CD4-positive, alpha-beta T cell (primary cell): ENCODE measurements at regions of chr6 and their contacts with region 1.

Region 1: GRCh38 chr6:158704181-158704822 is 54.4 kb downstream of the SYTL3 start:
- DNase-seq: peak; percentile 43 to 89 (median 74)
- ATAC-seq: peak; percentile 96
- H3K4me3 ChIP-seq: peak overlapping the region; percentile 44
- H3K4me3 Mint-ChIP-seq: peak overlapping the region; percentile 69
- H3K27ac ChIP-seq: no peak overlapping the region
- H3K27ac Mint-ChIP-seq: no peak overlapping the region
- H3K4me1 ChIP-seq: peaks cover 17% of the 10 kb centered on the region
- H3K4me1 Mint-ChIP-seq: peaks cover 6% of the 10 kb centered on the region
- H3K27me3 ChIP-seq: no peaks in the 10 kb centered on the region
- H3K27me3 Mint-ChIP-seq: no peaks in the 10 kb centered on the region
- CTCF ChIP-seq: peak; percentile 99

Region 2: DNA sequence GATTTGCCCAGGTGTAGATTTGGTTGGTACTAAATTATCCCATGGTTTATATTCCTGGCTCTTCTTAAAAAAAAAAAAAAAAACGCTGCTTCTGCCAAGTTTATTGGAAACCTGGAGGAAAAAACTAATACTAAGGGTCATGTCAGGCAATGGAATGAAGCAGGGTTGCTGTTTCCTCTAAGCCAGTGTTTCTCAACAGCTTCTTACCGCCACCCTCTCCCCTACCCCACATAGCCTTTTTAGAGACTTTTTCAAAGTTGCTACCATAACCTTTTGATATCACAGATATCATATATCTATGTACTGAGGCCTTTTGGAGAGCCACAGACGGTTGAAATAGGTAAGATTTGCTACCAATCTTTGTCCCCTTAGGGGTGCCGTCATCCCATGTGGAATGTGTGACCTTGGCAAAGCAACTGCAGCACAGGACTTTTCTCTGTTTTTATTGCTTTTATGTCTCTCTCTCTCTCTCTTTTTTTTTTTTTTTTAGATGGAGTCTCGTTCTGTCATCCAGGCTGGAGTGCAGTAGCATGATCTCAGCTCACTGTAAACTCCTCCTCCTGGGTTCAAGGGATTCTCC is 19.5 kb before region 1 on chr6:
- CTCF ChIA-PET with region 1: no interaction called
- POLR2A ChIA-PET with region 1: no interaction called
- intact Hi-C with region 1: no loop called
- DNase-seq: no peak
- ATAC-seq: no peak
- H3K4me3 ChIP-seq: no peak overlapping the region
- H3K4me3 Mint-ChIP-seq: no peak overlapping the region
- H3K27ac ChIP-seq: no peak overlapping the region
- H3K27ac Mint-ChIP-seq: peak overlapping the region; percentile 7
- H3K4me1 ChIP-seq: peaks cover 44% of the 10 kb centered on the region
- H3K4me1 Mint-ChIP-seq: peaks cover 49% of the 10 kb centered on the region
- H3K27me3 ChIP-seq: no peaks in the 10 kb centered on the region
- H3K27me3 Mint-ChIP-seq: no peaks in the 10 kb centered on the region
- CTCF ChIP-seq: no peak

Region 3: DNA sequence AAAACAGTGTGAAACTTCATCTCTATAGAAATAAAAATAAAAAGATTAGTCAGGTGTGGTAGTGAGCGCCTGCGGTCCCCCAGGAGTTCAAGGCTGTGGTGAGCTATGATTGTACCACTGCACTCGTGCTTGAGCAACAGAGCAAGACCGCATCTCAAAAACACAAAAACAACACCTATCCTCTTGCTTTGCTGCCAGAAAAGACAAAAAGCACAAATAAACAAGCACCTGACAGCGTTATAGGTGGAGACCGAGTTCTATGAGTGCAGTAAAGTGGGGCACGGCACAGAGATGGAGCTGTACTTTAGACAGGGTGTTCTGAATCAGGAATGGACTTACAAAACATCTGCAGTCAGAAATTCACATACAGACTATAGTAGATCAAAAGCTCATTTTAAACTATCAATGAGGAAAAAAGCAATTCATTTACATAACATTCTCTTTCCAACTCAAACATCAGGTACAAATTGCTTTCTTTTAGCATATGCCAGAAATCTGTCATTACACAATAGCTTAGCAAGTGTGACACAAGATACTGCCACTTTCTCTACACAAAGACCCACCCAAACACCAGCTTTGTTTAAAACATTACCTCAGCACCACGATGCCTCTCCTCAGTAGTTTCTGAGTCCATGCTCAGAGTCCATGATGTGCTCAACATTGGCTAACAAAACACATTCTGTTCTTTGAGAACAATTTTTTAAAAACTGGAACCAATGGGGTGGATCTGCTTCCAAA is 104.8 kb after region 1 on chr6:
- CTCF ChIA-PET with region 1: interaction called, 4 read pairs
- POLR2A ChIA-PET with region 1: no interaction called
- intact Hi-C with region 1: loop called in 1 of 2 experiments (anchors 5 kb)
- DNase-seq: peak in 6 of 14 experiments; percentile 32 to 73 (median 50)
- ATAC-seq: peak; percentile 58
- H3K4me3 ChIP-seq: no peak overlapping the region
- H3K4me3 Mint-ChIP-seq: peak overlapping the region; percentile 60
- H3K27ac ChIP-seq: peak overlapping the region in 1 of 2 donors; percentile 43
- H3K27ac Mint-ChIP-seq: peak overlapping the region; percentile 82
- H3K4me1 ChIP-seq: peaks cover 79% of the 10 kb centered on the region
- H3K4me1 Mint-ChIP-seq: peaks cover 99% of the 10 kb centered on the region
- H3K27me3 ChIP-seq: no peaks in the 10 kb centered on the region
- H3K27me3 Mint-ChIP-seq: no peaks in the 10 kb centered on the region
- CTCF ChIP-seq: no peak

Region 4: DNA sequence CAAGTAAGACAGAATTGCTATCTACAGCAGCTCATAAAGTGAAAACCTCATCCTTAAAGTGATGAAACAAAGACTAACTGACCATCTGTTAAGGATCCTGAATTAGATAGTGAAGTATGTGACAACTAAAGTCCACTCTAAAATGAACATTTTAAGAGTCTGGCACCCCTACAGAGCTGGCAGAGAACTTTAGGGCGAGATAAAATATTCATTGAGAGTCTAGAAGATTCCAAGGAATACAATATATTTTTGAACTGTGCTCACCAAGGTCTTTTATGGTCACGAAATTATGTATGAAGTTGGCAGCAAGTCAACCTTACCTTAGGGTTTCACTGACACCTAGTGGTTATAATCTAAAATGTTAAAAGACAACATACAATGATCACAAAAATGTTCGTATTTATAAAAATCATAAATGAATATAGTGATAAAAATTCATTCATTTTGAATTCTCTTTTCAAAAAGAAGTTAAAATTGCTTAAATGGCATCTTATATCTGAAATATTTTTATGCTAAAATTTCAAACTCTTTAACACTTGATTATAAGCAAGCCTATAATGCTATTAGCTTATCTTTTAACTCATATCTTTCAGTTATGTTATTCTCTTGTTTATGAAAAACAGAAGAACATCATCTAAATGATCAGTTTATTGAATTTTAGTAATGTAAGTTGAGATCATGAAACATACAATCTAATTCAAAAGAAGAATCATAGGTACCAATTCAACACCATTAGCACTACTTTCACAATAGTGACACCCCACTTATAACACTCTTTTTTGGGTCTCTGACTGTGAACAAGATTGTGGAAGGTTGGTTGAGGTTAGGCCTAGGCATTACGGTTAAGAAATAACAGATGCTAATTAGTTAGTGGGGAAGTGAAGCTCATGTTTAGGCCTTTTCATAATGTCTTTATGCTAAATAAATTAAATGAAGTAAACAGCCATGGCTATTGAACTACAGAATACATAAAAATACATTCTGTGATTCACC is 268.2 kb after region 1 on chr6:
- CTCF ChIA-PET with region 1: interaction called, 11 read pairs
- POLR2A ChIA-PET with region 1: interaction called, 5 read pairs
- intact Hi-C with region 1: loop called (anchors 1 kb)
- DNase-seq: peak in 3 of 14 experiments; percentile 70 to 78 (median 78)
- ATAC-seq: peak; percentile 61
- H3K4me3 ChIP-seq: no peak overlapping the region
- H3K4me3 Mint-ChIP-seq: no peak overlapping the region
- H3K27ac ChIP-seq: no peak overlapping the region
- H3K27ac Mint-ChIP-seq: no peak overlapping the region
- H3K4me1 ChIP-seq: no peaks in the 10 kb centered on the region
- H3K4me1 Mint-ChIP-seq: peaks cover 4% of the 10 kb centered on the region
- H3K27me3 ChIP-seq: no peaks in the 10 kb centered on the region
- H3K27me3 Mint-ChIP-seq: no peaks in the 10 kb centered on the region
- CTCF ChIP-seq: peak; percentile 88